Right cardiac atrium (tissue), 5 donors: ENCODE measurements at regions of chr14 and their contacts with region 1.

Region 1: GRCh38 chr14:88189417-88190191 is 133.5 kb downstream of the KCNK10 start:
- DNase-seq: peak in 2 of 3 donors; percentile 49 to 56
- ATAC-seq: peak; percentile 95 to 96
- H3K4me3 ChIP-seq: no peak overlapping the region
- H3K27ac ChIP-seq: no peak overlapping the region
- H3K4me1 ChIP-seq: peaks cover 2% of the 10 kb centered on the region
- H3K27me3 ChIP-seq: no peaks in the 10 kb centered on the region

Region 2: GRCh38 chr14:88380405-88380804 is 190.8 kb after region 1 on chr14:
- intact Hi-C with region 1: loop called in 1 of 4 experiments (anchors 5 kb)
- DNase-seq: no peak
- ATAC-seq: no peak
- H3K4me3 ChIP-seq: no peak overlapping the region
- H3K27ac ChIP-seq: no peak overlapping the region
- H3K4me1 ChIP-seq: no peaks in the 10 kb centered on the region
- H3K27me3 ChIP-seq: no peaks in the 10 kb centered on the region